ENCODE measurements at regions of chr13 and their contacts with region 1.

Region 1: DNA sequence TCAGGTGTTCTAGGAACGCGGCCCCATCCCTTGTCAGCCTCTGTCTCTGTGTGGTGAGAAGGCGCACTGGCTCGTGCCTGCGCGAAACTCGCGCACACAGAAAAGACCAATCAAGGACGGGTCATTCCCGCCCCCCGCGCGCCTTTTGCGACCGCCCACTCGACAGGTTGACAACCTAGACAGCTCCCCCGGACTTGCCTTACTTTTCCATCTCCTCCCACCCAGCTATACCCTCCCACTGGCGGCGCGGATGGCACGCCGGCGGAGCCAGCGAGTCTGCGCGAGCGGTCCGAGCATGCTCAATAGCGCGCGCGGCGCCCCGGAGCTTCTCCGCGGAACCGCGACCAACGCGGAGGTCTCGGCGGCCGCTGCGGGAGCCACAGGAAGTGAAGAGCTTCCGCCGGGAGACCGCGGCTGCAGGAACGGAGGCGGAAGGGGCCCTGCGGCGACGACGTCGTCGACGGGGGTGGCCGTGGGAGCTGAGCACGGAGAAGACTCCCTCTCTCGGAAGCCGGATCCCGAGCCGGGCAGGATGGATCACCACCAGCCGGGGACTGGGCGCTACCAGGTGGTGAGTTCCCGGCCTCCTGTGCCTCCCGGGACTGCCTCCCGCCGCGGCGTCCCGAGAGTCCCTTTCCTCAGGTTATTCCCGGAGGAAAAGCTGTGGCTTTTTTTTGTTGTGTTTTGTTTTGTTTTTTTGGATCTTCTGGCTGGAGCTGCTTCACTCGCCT is at the start of gene NDFIP2:
- DNase-seq: peak; percentile 66 to 96 (median 78)
- ATAC-seq: peak; percentile 89
- H3K4me3 ChIP-seq: peak within 1 kb of the TSS; percentile 79
- H3K4me3 Mint-ChIP-seq: peak within 1 kb of the TSS; percentile 90 to 99 (median 92)
- H3K27ac ChIP-seq: peak within 1 kb of the TSS; percentile 28
- H3K27ac Mint-ChIP-seq: peak within 1 kb of the TSS; percentile 71 to 95 (median 90)
- H3K4me1 ChIP-seq: peaks cover 6 to 12% of the 10 kb centered on the region in 2 donors
- H3K4me1 Mint-ChIP-seq: peaks cover 24 to 66% (median 46%) of the 10 kb centered on the region in 7 donors
- H3K27me3 ChIP-seq: no peaks in the 10 kb centered on the region
- H3K27me3 Mint-ChIP-seq: peaks cover 0 to 7% (median 0%) of the 10 kb centered on the region in 5 donors
- total RNA-seq, gene NDFIP2: 2.6 to 123 (median 4.9) TPM

Region 2: GRCh38 chr13:79194272-79194671 is 286.8 kb before region 1 on chr13:
- CTCF ChIA-PET with region 1: no interaction called
- POLR2A ChIA-PET with region 1: no interaction called
- intact Hi-C with region 1: loop called in 1 of 2 experiments (anchors 10 kb)
- DNase-seq: peak in 8 of 9 donors; percentile 14 to 59 (median 46)
- ATAC-seq: peak; percentile 89
- H3K4me3 ChIP-seq: no peak overlapping the region
- H3K4me3 Mint-ChIP-seq: peak overlapping the region in 2 of 10 donors; percentile 21 to 61
- H3K27ac ChIP-seq: no peak overlapping the region
- H3K27ac Mint-ChIP-seq: peak overlapping the region in 1 of 9 donors; percentile 24
- H3K4me1 ChIP-seq: peaks cover 9 to 11% of the 10 kb centered on the region in 2 donors
- H3K4me1 Mint-ChIP-seq: peaks cover 6 to 53% (median 21%) of the 10 kb centered on the region in 7 donors
- H3K27me3 ChIP-seq: no peaks in the 10 kb centered on the region
- H3K27me3 Mint-ChIP-seq: peaks cover 0 to 21% (median 0%) of the 10 kb centered on the region in 5 donors

Region 3: DNA sequence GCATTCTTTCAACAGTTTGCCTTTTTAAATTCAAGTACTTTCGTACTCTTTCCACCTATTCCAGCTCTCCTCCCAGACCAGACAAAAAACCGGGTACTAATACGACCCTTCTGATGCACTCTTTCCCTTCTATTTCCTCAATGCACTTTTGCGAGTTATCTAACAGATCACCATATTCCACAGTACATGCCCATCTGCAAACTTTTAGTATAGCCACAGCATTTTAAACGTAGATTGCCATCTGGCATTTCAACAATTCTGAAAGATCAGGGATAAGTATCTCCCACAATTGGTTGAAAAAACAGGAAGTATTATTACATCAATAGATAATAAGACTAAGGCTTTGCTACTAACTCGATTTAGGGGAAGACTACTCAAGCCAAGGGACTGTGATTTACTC is 106.5 kb before region 1 on chr13:
- CTCF ChIA-PET with region 1: no interaction called
- POLR2A ChIA-PET with region 1: no interaction called
- intact Hi-C with region 1: no loop called
- DNase-seq: no peak
- ATAC-seq: no peak
- H3K4me3 ChIP-seq: no peak overlapping the region
- H3K4me3 Mint-ChIP-seq: no peak overlapping the region
- H3K27ac ChIP-seq: no peak overlapping the region
- H3K27ac Mint-ChIP-seq: peak overlapping the region in 2 of 9 donors; percentile 38 to 67
- H3K4me1 ChIP-seq: peaks cover 0 to 3% of the 10 kb centered on the region in 2 donors
- H3K4me1 Mint-ChIP-seq: peaks cover 4 to 19% (median 14%) of the 10 kb centered on the region in 7 donors
- H3K27me3 ChIP-seq: no peaks in the 10 kb centered on the region
- H3K27me3 Mint-ChIP-seq: no peaks in the 10 kb centered on the region

Region 4: GRCh38 chr13:79423801-79424642 is 57.1 kb before region 1 on chr13:
- CTCF ChIA-PET with region 1: interaction called, 3 read pairs
- POLR2A ChIA-PET with region 1: no interaction called
- intact Hi-C with region 1: loop called (anchors 1 kb)
- DNase-seq: peak in 5 of 9 donors; percentile 33 to 53 (median 37)
- ATAC-seq: peak; percentile 76
- H3K4me3 ChIP-seq: no peak overlapping the region
- H3K4me3 Mint-ChIP-seq: no peak overlapping the region
- H3K27ac ChIP-seq: no peak overlapping the region
- H3K27ac Mint-ChIP-seq: no peak overlapping the region
- H3K4me1 ChIP-seq: no peaks in the 10 kb centered on the region
- H3K4me1 Mint-ChIP-seq: peaks cover 0 to 16% (median 0%) of the 10 kb centered on the region in 7 donors
- H3K27me3 ChIP-seq: no peaks in the 10 kb centered on the region
- H3K27me3 Mint-ChIP-seq: no peaks in the 10 kb centered on the region

Region 5: GRCh38 chr13:79468819-79469218 is 12.3 kb before region 1 on chr13:
- CTCF ChIA-PET with region 1: interaction called, 3 read pairs
- POLR2A ChIA-PET with region 1: no interaction called
- intact Hi-C with region 1: loop called in 1 of 2 experiments (anchors 1 kb)
- DNase-seq: no peak
- ATAC-seq: no peak
- H3K4me3 ChIP-seq: no peak overlapping the region
- H3K4me3 Mint-ChIP-seq: peak overlapping the region in 1 of 10 donors; percentile 3
- H3K27ac ChIP-seq: no peak overlapping the region
- H3K27ac Mint-ChIP-seq: no peak overlapping the region
- H3K4me1 ChIP-seq: no peaks in the 10 kb centered on the region
- H3K4me1 Mint-ChIP-seq: peaks cover 0 to 17% (median 0%) of the 10 kb centered on the region in 7 donors
- H3K27me3 ChIP-seq: no peaks in the 10 kb centered on the region
- H3K27me3 Mint-ChIP-seq: peaks cover 0 to 3% (median 0%) of the 10 kb centered on the region in 5 donors

Region 6: GRCh38 chr13:79522583-79522982 is 41.5 kb after region 1 on chr13:
- CTCF ChIA-PET with region 1: no interaction called
- POLR2A ChIA-PET with region 1: no interaction called
- intact Hi-C with region 1: loop called in 1 of 2 experiments (anchors 1 kb)
- DNase-seq: peak in 1 of 9 donors; percentile 40
- ATAC-seq: peak; percentile 74
- H3K4me3 ChIP-seq: no peak overlapping the region
- H3K4me3 Mint-ChIP-seq: peak overlapping the region in 1 of 10 donors; percentile 84
- H3K27ac ChIP-seq: no peak overlapping the region
- H3K27ac Mint-ChIP-seq: peak overlapping the region in 1 of 9 donors; percentile 91
- H3K4me1 ChIP-seq: peaks cover 0 to 7% of the 10 kb centered on the region in 2 donors
- H3K4me1 Mint-ChIP-seq: peaks cover 0 to 41% (median 13%) of the 10 kb centered on the region in 7 donors
- H3K27me3 ChIP-seq: no peaks in the 10 kb centered on the region
- H3K27me3 Mint-ChIP-seq: no peaks in the 10 kb centered on the region

Region 7: DNA sequence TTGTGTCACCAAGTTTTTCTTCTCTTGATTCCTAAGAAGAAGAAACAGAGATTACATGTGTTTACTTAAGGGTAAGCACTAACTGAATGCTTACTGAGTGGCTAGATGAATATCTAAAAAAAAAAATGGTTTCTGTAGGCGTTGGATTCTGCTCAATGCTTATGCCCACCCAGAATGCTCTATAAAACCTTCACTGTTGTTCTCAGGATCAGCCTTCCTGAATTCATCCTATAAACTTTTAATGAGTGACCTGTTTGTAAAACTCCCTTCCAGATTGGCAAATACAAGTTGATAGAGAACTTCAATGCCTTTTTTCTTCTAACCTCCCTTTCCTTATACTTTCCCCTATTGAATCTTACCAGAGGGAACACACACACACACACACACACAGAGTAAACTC is 90.0 kb after region 1 on chr13:
- CTCF ChIA-PET with region 1: no interaction called
- POLR2A ChIA-PET with region 1: no interaction called
- intact Hi-C with region 1: no loop called
- DNase-seq: no peak
- ATAC-seq: no peak
- H3K4me3 ChIP-seq: no peak overlapping the region
- H3K4me3 Mint-ChIP-seq: no peak overlapping the region
- H3K27ac ChIP-seq: no peak overlapping the region
- H3K27ac Mint-ChIP-seq: no peak overlapping the region
- H3K4me1 ChIP-seq: no peaks in the 10 kb centered on the region
- H3K4me1 Mint-ChIP-seq: no peaks in the 10 kb centered on the region
- H3K27me3 ChIP-seq: no peaks in the 10 kb centered on the region
- H3K27me3 Mint-ChIP-seq: peaks cover 0 to 21% (median 7%) of the 10 kb centered on the region in 5 donors

Measured in naive thymus-derived CD4-positive, alpha-beta T cell (primary cell).